GM10248 (cell line): ENCODE measurements at regions of chr20 and their contacts with region 1.

Region 1: GRCh38 chr20:57596998-57597939 is 23.0 kb downstream of the ZBP1 start:
- DNase-seq: peak; percentile 90
- CTCF ChIP-seq: peak; percentile 93

Region 2: GRCh38 chr20:57514273-57514751 is 83.0 kb before region 1 on chr20:
- CTCF ChIA-PET with region 1: interaction called, 14 read pairs
- POLR2A ChIA-PET with region 1: no interaction called
- DNase-seq: peak; percentile 58
- CTCF ChIP-seq: peak; percentile 53

Region 3: GRCh38 chr20:57628047-57628961 is 31.0 kb after region 1 on chr20:
- CTCF ChIA-PET with region 1: interaction called, 11 read pairs
- POLR2A ChIA-PET with region 1: no interaction called
- DNase-seq: no peak
- CTCF ChIP-seq: no peak

Region 4: DNA sequence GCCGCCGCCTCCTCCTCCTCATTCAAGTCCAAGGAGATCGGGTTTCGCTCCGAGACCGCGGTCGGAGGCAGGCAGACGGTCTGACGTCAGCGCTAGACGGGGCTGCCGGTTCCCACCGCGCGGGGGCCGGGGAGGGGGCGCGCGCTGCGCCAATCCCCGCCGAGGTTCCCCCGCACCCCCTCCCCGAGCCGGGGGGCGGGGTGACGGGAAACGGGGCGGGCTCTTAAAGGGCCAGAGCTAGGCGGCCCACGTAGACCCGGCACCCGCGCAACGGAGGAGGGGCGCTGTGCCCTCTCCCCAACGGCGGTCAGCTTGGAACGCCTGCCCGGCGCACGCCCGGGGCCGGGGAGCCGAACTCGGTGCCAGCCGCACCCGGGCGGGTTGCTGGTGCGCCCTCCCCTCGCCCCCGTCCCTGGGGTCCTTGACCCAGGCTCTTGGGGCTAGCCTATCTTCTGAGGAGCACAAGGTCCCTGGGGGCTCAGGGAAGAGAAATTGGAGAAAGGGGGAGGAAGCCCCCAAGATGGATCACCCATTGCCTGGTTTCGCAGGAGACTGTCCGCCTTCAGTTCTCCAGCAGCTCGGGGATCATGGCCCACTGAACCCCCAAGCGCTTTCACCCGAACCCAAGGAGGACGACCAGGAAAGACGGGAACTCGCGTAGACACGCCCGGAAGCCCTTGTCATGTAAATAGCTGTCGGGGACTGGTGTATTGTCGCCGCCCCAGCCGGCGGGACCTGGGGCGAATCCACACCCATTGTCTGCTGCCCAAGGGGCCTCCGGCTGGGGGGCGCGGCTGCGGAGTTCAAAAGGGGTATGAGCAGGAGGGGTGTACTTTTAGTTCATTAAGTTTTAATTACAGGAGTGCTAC is 112.9 kb after region 1 on chr20 and contains the start of gene PMEPA1:
- CTCF ChIA-PET with region 1: no interaction called
- POLR2A ChIA-PET with region 1: no interaction called
- DNase-seq: peak; percentile 88
- CTCF ChIP-seq: no peak

Region 5: GRCh38 chr20:58087193-58087858 is 490.1 kb after region 1 on chr20:
- CTCF ChIA-PET with region 1: interaction called, 13 read pairs
- POLR2A ChIA-PET with region 1: no interaction called
- DNase-seq: peak; percentile 43
- CTCF ChIP-seq: peak; percentile 58

Region 6: GRCh38 chr20:58179432-58180099 is 582.3 kb after region 1 on chr20:
- CTCF ChIA-PET with region 1: interaction called, 28 read pairs
- POLR2A ChIA-PET with region 1: no interaction called
- DNase-seq: peak; percentile 83
- CTCF ChIP-seq: peak; percentile 92

Region 7: DNA sequence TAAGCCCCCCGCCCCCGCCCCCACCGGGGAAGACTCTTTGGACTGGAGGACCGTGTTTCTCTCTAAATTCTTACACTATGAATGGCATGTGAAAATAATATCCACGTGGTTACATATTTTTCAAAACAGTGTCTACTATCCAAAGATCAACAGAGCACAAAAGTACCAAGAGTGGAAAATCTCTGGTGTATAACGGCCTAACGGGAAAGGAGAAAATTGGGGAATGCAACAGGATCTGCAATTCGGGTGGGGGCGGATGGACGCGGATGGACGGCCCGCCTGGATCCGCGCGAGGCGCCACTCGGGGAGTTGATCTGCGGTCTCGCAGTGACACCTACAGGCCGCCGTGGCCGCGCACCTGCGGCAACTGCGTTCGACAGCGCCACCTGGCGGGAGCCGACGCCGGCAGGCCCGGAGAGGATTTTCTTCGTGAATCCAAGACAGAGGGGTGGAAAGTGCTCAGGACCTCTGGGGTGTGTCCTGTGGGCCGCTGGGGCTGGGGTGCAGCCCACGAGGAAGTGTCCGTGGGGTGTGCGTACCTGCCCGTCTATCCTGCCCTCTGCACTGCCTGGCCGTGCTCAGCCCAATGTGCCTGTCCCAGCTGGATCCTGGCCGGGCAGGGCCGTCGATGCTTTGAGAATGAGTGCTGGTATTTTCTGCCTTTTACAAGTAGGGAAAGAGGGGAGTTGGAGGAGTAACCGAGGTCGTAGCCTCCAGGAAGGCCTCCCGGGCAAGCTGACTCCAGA is 612.6 kb after region 1 on chr20:
- CTCF ChIA-PET with region 1: interaction called, 87 read pairs
- POLR2A ChIA-PET with region 1: no interaction called
- DNase-seq: peak; percentile 93
- CTCF ChIP-seq: peak; percentile 100